ENCODE measurements at regions of chr18 and their contacts with region 1.

Region 1: GRCh38 chr18:830315-830901 is 18.4 kb upstream of the YES1 start:
- DNase-seq: no peak
- H3K4me3 ChIP-seq: no peak overlapping the region
- H3K27ac ChIP-seq: no peak overlapping the region
- H3K27me3 ChIP-seq: peaks cover 3% of the 10 kb centered on the region
- CTCF ChIP-seq: no peak

Region 2: DNA sequence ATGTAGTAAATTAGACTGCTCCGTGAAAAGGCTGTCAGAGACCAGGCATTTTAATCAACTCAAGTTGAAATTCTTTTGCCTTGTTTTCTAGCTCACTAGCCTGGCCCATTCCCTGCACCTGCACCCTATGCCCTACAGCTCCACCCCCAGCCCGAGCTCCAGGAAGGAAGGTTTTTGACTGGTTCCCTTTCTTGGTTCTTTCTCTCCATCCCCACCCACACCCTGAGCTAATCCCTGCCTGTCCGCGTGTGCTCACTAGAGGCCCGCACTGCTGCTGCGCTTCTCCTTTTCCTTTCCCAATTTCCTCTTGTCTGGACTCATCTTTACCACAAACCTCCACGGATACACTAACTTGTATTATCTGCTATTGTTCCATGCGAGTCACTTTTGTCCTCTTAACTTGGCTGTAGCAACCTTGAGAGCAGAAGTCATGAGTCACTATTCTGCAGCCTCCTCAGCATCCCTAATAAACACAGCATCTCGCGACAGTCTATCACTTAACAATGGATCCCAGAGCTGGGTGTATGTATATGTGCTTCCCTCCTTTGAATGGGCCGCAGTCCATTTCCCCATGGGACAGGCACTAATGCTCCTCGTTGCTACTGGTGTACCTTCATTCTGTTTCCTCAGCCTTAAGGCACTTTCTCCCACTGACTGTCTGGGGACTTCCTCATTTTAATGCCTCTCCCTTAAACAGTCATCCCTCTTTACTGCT is 366.4 kb before region 1 on chr18:
- CTCF ChIA-PET with region 1: no interaction called
- POLR2A ChIA-PET with region 1: no interaction called
- DNase-seq: no peak
- H3K4me3 ChIP-seq: no peak overlapping the region
- H3K27ac ChIP-seq: no peak overlapping the region
- H3K27me3 ChIP-seq: no peaks in the 10 kb centered on the region
- CTCF ChIP-seq: no peak

Region 3: DNA sequence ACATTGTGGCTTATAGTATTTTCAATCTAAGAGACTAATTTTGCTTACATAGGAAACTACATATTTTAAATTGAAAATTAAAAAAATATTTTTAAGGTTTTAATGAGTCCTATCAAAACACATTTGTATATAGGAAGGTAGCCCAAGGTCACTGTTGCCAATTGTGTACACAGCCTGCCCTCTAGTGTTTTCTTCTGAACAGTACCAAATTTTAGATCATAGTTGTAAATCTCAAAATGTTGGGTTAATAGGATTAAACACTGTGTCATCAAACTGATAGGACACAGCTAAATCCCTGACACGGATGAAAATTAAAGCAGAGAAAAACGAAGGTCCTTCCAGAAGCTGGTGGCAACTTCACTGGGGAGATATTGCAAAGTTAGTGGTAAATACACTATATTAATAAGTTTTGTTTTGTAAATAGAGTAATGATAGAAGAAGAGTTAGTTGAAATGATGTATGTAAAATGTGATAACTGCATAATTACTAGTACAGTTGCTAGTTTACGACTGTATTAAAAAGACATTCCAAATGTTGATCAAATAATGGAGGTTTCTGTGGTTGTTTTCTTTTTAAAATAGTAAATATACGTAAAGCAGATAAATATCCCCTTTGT is 213.9 kb before region 1 on chr18:
- CTCF ChIA-PET with region 1: interaction called, 50 read pairs
- POLR2A ChIA-PET with region 1: no interaction called
- DNase-seq: no peak
- H3K4me3 ChIP-seq: no peak overlapping the region
- H3K27ac ChIP-seq: no peak overlapping the region
- H3K27me3 ChIP-seq: peaks cover 29% of the 10 kb centered on the region
- CTCF ChIP-seq: peak; percentile 78

Region 4: GRCh38 chr18:641224-641623 is 189.2 kb before region 1 on chr18:
- CTCF ChIA-PET with region 1: interaction called, 11 read pairs
- POLR2A ChIA-PET with region 1: no interaction called
- DNase-seq: no peak
- H3K4me3 ChIP-seq: no peak overlapping the region
- H3K27ac ChIP-seq: no peak overlapping the region
- H3K27me3 ChIP-seq: peaks cover 4% of the 10 kb centered on the region
- CTCF ChIP-seq: no peak

Region 5: DNA sequence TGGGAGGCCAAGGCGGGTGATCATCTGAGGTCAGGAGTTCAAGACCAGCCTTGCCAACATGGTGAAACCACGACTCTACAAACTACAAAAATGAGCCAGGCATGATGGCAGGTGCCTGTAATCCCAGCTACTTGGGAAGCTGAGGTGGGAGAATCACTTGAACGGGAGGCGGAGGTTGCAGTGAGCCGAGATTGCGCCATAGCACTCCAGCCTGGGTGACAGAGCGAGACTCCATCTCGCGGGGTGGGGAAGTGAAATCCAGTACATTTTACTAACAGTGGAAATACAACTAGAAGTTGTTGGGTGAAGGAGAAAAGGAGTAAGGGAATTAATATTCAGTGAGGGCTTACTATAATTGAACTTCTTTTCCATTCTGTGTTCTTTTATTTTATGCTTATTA is 104.8 kb before region 1 on chr18:
- CTCF ChIA-PET with region 1: interaction called, 13 read pairs
- POLR2A ChIA-PET with region 1: no interaction called
- DNase-seq: no peak
- H3K4me3 ChIP-seq: no peak overlapping the region
- H3K27ac ChIP-seq: no peak overlapping the region
- H3K27me3 ChIP-seq: no peaks in the 10 kb centered on the region
- CTCF ChIP-seq: no peak

Region 6: DNA sequence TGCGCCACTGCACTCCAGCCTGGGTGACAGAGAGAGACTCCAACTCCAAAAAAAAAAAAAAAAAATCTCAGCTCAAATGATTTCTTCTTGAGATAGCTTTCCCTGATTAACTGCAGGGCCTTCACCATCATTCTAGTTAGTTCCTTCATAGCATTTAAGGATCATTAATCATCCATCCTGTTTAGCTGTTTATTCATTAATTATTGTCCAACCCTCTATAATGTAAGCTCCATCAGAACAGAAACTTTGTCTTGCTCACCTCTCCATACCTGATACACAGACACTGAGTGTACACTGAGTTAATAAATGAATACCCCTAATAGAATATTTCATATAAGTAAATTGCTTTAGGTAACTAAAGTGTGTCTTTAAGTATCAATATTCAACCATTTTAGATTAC is 75.7 kb before region 1 on chr18:
- CTCF ChIA-PET with region 1: interaction called, 19 read pairs
- POLR2A ChIA-PET with region 1: no interaction called
- DNase-seq: no peak
- H3K4me3 ChIP-seq: no peak overlapping the region
- H3K27ac ChIP-seq: no peak overlapping the region
- H3K27me3 ChIP-seq: no peaks in the 10 kb centered on the region
- CTCF ChIP-seq: no peak

Region 7: DNA sequence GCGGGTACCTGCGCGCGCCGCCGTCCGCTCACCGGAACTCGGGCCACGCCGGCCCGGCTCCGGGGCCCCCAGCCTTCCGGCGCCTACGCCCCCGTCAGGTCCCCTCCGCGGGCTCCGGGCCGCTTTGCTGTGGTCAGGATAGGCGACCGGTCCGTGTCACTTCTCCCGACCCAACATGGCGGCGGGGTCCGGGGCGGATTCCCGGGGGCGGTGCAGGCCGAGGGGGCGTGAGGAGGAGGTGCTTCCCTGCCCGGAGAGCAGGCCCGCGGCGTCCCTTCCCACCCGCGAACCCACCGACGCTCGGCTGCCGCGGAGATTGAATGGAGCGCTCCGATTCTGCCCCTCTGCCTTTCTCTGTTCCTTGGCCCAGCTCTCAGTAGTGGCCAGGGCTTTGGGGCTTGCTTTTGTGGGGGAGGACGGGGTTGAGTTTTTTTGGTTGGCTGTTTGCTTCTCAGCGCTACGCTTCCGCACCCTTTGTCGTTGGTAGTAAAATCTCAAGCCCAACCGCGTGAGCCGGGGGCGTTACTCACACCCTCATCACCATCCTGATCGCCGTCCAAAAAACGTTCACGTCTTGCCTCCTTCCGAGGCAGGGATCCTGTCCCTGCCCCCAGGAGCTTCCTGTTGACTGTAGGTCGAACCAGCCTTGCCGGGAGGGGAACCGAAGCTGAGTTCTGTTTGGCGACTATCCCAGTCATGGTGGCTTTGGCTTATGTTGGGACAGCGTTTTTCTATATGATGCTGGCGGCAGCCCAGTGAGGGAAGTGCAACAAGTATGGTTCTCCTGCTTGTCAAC is 17.8 kb before region 1 on chr18:
- CTCF ChIA-PET with region 1: interaction called, 25 read pairs
- POLR2A ChIA-PET with region 1: interaction called, 3 read pairs
- DNase-seq: peak; percentile 41
- H3K4me3 ChIP-seq: peak overlapping the region; percentile 90
- H3K27ac ChIP-seq: peak overlapping the region; percentile 92
- H3K27me3 ChIP-seq: peaks cover 4% of the 10 kb centered on the region
- CTCF ChIP-seq: no peak

Region 8: DNA sequence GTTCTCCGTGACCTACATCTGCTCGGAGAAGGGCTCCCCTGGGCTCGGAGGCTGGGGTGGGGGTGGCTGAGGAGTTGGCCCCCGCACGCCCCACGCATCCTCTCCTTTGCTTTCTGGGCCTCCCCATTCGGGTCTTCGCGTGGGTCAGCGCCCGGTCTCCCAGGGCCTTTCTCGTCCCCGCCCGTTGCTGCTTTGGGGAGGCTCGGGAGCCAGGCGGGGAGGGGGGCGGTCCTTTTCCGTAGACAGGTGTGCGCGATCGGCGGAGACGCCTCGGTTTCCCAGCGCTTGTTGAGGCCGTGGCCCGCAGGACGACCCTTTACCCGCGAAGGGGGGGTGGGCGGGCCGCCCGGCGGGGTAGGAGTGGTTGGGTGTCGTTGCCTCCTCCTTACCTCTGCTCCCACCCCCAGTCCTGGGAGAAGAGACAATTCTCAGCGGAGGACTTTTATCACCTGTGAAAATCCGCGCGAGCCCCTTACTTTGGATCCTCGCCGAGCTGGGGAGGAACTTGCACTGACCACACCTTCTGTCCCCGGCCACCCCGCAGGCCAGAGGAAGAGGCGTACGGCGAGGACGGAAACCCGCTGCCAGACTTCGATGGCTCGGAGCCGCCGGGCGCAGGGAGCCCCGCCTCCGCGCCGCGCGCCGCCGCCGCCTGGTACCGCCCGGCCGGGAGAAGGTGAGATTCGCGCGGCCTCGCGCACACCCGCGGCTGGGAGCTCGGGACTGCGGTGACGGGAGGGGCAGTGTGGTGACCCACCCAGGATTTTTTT is 76.9 kb after region 1 on chr18:
- CTCF ChIA-PET with region 1: no interaction called
- POLR2A ChIA-PET with region 1: no interaction called
- DNase-seq: no peak
- H3K4me3 ChIP-seq: no peak overlapping the region
- H3K27ac ChIP-seq: no peak overlapping the region
- H3K27me3 ChIP-seq: peaks cover 78% of the 10 kb centered on the region
- CTCF ChIP-seq: no peak